Gastrocnemius medialis (tissue), 4 donors: ENCODE measurements at regions of chr4 and their contacts with region 1.

Region 1: GRCh38 chr4:104860238-104861123 is 286.2 kb upstream of the TET2 start:
- DNase-seq: peak; percentile 8 to 12
- ATAC-seq: peak; percentile 69 to 70
- H3K4me3 ChIP-seq: no peak overlapping the region
- H3K27ac ChIP-seq: no peak overlapping the region
- H3K4me1 ChIP-seq: no peaks in the 10 kb centered on the region
- H3K27me3 ChIP-seq: peaks cover 0 to 6% (median 0%) of the 10 kb centered on the region in 3 donors
- CTCF ChIP-seq: peak; percentile 46 to 79 (median 66)
- POLR2A ChIP-seq: no peak

Region 2: GRCh38 chr4:104064646-104065577 is 795.6 kb before region 1 on chr4:
- in situ Hi-C with region 1: loop called in 1 of 4 experiments (anchors 25 kb)
- intact Hi-C with region 1: no loop called
- DNase-seq: no peak
- ATAC-seq: no peak
- H3K4me3 ChIP-seq: no peak overlapping the region
- H3K27ac ChIP-seq: no peak overlapping the region
- H3K4me1 ChIP-seq: no peaks in the 10 kb centered on the region
- H3K27me3 ChIP-seq: no peaks in the 10 kb centered on the region
- CTCF ChIP-seq: peak in 1 of 5 experiments; percentile 28
- POLR2A ChIP-seq: no peak

Region 3: GRCh38 chr4:104693599-104694201 is 166.8 kb before region 1 on chr4:
- in situ Hi-C with region 1: no loop called
- intact Hi-C with region 1: loop called (anchors 5 kb)
- DNase-seq: no peak
- ATAC-seq: no peak
- H3K4me3 ChIP-seq: no peak overlapping the region
- H3K27ac ChIP-seq: no peak overlapping the region
- H3K4me1 ChIP-seq: no peaks in the 10 kb centered on the region
- H3K27me3 ChIP-seq: no peaks in the 10 kb centered on the region
- CTCF ChIP-seq: peak in 1 of 5 experiments; percentile 31
- POLR2A ChIP-seq: no peak

Region 4: DNA sequence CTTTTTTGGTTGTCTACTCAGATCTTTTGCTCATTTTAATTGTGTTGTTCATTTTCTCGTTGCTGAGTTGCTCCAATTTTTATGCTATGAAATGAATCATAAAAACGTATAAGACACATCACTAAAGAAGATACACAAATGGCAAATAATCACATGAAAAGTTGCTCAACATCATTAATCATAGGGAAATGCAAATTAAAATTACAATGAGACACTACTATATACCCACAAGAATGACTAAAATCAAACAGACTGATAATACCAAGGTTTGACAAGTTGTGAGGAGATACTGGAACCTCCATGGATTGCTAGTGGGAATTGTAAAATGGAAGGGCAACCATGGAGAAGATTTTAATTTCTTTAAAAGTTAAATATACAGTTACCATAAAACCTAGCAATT is 865.1 kb after region 1 on chr4:
- in situ Hi-C with region 1: no loop called
- intact Hi-C with region 1: no loop called
- DNase-seq: no peak
- ATAC-seq: no peak
- H3K4me3 ChIP-seq: no peak overlapping the region
- H3K27ac ChIP-seq: no peak overlapping the region
- H3K4me1 ChIP-seq: no peaks in the 10 kb centered on the region
- H3K27me3 ChIP-seq: no peaks in the 10 kb centered on the region
- CTCF ChIP-seq: no peak
- POLR2A ChIP-seq: no peak